Stomach (tissue), 19 donors: ENCODE measurements at regions of chr9 and their contacts with region 1.

Region 1: DNA sequence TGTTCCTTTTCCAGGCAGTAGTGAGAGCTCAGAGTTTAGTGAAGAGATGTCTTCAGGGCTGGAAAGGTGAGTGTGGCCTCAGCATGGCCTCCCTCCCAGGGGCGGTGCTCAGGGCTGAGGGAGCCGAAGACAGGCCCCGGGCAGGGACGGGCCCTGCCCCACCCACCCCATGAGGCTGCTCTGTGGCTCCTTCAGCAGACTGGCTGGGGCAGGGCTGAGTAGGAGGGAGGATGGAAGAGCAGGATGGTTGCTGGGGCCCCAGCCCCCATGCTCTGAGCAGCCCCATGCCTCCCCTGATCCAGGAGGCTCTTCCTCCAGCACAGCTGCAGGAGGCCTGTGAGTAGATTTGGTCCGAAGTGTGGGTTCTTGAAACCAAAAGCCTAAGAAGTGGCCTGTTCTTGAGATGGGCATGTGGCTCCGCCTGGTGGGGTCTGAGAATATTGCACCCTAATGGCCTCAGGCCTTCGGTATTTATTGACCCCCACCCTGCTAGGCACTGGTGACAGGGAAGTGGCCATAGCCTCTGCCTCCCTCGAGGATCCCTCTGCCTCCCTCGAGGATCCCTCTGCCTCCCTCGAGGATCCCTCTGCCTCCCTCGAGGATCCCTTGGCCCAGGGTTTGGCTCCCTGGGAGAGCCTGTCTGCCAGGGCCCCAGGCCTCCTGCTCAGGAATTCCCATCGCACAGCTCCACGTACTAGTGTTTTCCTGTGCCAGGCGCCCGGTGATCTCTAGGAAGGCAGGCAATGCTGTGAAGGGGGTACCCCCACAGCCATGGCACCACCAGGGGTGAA is 65.4 kb upstream of the GARNL3 start:
- DNase-seq: peak; percentile 85 to 93
- H3K4me3 ChIP-seq: no peak overlapping the region
- H3K27ac ChIP-seq: peak overlapping the region in 4 of 5 donors; percentile 6 to 81 (median 60)
- H3K4me1 ChIP-seq: peaks cover 13 to 26% (median 20%) of the 10 kb centered on the region in 4 donors
- H3K27me3 ChIP-seq: no peaks in the 10 kb centered on the region
- CTCF ChIP-seq: peak in 6 of 7 experiments; percentile 35 to 97 (median 91)
- EP300 ChIP-seq: no peak
- POLR2A ChIP-seq: no peak

Region 2: DNA sequence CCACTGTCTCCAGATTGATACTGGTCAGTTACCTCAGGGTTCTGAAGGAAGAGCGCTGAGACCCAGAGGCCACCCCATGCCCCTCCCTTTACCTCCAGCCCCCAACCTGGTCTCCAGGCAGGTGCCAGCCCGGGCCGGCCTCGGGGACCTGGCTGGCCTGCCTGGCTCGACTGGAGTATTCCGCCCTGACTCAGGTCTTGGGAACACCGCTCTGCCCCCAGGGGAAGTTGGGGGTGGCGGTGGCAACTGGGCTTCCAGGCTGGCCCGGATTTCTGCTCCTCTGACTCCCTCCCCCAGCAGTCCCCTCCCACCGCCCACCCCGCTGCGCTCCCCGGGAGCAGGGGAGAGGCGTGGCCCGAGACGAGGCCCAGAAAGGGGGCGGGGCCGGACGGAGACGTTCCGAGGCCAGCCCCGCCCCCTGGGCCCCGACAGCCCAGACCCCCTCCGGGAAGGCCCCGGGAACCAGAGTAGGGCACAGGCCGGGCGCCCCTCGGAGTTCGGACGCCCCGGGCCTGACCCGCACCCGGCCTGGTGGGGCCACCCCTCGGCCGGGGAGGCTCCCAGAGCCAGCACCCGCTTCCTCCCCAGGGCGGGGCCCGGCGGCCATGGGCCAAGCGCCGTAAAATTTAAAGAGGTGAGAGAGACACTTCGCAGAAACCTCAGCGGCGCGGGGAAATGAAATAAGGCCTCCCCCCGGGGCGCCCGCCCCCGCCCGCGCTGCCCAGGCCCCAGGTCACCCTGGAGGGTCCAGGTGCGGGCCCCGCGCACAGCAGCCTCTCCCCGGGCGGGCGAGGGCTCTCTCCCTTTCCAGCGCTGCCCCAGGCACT is 476.7 kb before region 1 on chr9:
- intact Hi-C with region 1: no loop called
- DNase-seq: peak; percentile 80 to 93
- H3K4me3 ChIP-seq: peak overlapping the region; percentile 60 to 82 (median 69)
- H3K27ac ChIP-seq: peak overlapping the region; percentile 41 to 89 (median 82)
- H3K4me1 ChIP-seq: peaks cover 14 to 36% (median 21%) of the 10 kb centered on the region in 4 donors
- H3K27me3 ChIP-seq: peaks cover 0 to 60% (median 17%) of the 10 kb centered on the region in 3 donors
- CTCF ChIP-seq: no peak
- EP300 ChIP-seq: no peak
- POLR2A ChIP-seq: no peak

Region 3: DNA sequence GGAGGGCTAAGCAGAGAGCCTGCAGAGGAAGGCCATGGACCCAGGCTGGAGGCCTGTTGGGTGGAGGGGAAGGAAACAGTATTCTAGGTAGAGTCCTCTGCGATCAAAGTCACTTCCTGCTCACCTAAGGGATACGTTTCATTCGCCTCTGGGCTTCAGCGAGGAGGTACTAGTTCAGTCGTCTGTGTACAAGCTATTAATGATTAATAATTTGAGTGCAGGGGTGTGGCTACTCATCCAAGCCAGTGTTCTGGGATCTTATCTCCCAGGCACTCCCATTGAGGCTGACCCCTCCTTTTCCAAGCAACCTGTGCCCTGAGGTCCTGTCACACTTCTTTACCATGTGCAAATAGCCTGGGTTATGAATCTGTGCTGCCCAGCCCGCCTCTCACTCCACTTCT is 259.4 kb before region 1 on chr9:
- intact Hi-C with region 1: loop called (anchors 5 kb)
- DNase-seq: peak; percentile 66 to 91
- H3K4me3 ChIP-seq: no peak overlapping the region
- H3K27ac ChIP-seq: peak overlapping the region; percentile 70 to 91 (median 85)
- H3K4me1 ChIP-seq: peaks cover 0 to 42% (median 19%) of the 10 kb centered on the region in 4 donors
- H3K27me3 ChIP-seq: no peaks in the 10 kb centered on the region
- CTCF ChIP-seq: no peak
- EP300 ChIP-seq: no peak
- POLR2A ChIP-seq: no peak